ENCODE measurements at regions of chr1 and their contacts with region 1.

Region 1: DNA sequence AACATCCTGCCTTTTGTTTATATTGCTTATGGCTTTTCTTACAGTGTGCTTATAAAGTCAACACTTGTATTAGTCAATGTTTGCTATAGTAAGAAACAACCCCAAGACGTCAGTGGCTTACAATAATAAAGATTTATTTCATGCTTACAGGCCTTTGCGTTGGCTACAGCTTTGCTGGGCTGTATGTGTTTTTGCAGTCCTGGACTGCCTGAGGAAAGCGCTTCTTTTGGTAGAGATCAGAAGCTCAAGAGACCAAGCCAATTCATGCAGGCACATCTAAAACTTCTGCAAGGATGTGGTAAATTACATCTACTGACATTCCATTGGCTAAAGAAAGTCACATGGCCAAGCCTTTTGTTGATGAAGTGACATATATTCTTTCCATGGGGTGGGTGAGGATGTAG is 17.5 kb upstream of the PRKAA2 start:
- DNase-seq: peak; percentile 80
- ATAC-seq: peak; percentile 89
- H3K4me3 ChIP-seq: no peak overlapping the region
- H3K27ac ChIP-seq: peak overlapping the region; percentile 84
- H3K4me1 ChIP-seq: peaks cover 44% of the 10 kb centered on the region
- H3K27me3 ChIP-seq: no peaks in the 10 kb centered on the region
- CTCF ChIP-seq: no peak

Region 2: GRCh38 chr1:55868026-55868425 is 759.6 kb before region 1 on chr1:
- CTCF ChIA-PET with region 1: interaction called, 20 read pairs
- POLR2A ChIA-PET with region 1: no interaction called
- intact Hi-C with region 1: no loop called
- DNase-seq: peak; percentile 48
- ATAC-seq: peak; percentile 45
- H3K4me3 ChIP-seq: no peak overlapping the region
- H3K27ac ChIP-seq: peak overlapping the region; percentile 25
- H3K4me1 ChIP-seq: peaks cover 23% of the 10 kb centered on the region
- H3K27me3 ChIP-seq: no peaks in the 10 kb centered on the region
- CTCF ChIP-seq: peak; percentile 40; the same call in 1 of the 2 replicates

Region 3: DNA sequence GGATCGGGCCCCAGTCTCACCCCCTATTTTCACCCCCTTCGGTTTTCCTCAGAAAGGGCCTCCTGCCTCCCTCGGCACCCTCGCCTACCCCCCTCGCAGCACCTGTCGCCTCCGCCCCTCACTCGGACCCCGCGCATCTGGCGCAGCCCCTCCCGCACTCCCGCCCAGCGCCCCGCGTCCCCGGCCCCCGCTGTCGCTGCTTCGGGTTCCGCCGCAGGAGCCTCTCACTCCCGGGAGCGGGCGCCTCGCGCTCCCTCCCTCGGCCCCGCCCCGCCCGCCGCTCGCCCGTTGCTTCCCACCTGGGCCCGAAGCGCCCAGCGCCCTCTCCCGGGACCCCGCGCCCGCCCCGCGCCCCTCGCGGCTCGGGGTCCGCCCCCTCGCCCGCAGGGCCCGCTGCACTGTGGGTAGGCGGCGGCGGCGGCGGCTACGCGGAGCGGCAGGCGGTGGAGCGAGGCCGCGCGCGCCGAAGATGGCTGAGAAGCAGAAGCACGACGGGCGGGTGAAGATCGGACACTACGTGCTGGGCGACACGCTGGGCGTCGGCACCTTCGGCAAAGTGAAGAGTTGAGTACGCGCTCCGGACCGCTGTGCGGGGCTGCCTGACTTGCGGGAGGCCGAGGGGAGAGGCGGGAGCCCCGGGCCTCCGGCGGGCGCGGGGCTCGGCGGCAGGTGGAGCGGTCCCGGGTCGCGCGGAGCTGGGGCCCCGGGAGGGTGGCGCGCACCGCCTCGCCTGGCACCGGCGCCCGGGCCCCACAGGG is 17.5 kb after region 1 on chr1 and contains the start of gene PRKAA2:
- CTCF ChIA-PET with region 1: no interaction called
- POLR2A ChIA-PET with region 1: no interaction called
- intact Hi-C with region 1: loop called (anchors 2 kb)
- DNase-seq: peak; percentile 52
- ATAC-seq: peak; percentile 69
- H3K4me3 ChIP-seq: peak within 1 kb of the TSS; percentile 82
- H3K27ac ChIP-seq: peak within 1 kb of the TSS; percentile 32
- H3K4me1 ChIP-seq: peaks cover 13% of the 10 kb centered on the region
- H3K27me3 ChIP-seq: no peaks in the 10 kb centered on the region
- CTCF ChIP-seq: no peak
- total RNA-seq, gene PRKAA2: 3.4 and 4.5 TPM in 2 replicates

Region 4: GRCh38 chr1:56688506-56689026 is 60.9 kb after region 1 on chr1:
- CTCF ChIA-PET with region 1: no interaction called
- POLR2A ChIA-PET with region 1: interaction called, 3 read pairs
- intact Hi-C with region 1: loop called (anchors 1 kb)
- DNase-seq: peak; percentile 97
- ATAC-seq: peak; percentile 98
- H3K4me3 ChIP-seq: peak overlapping the region; percentile 3; the same call in 1 of the 2 replicates
- H3K27ac ChIP-seq: peak overlapping the region; percentile 78
- H3K4me1 ChIP-seq: peaks cover 33% of the 10 kb centered on the region
- H3K27me3 ChIP-seq: no peaks in the 10 kb centered on the region
- CTCF ChIP-seq: no peak

Region 5: DNA sequence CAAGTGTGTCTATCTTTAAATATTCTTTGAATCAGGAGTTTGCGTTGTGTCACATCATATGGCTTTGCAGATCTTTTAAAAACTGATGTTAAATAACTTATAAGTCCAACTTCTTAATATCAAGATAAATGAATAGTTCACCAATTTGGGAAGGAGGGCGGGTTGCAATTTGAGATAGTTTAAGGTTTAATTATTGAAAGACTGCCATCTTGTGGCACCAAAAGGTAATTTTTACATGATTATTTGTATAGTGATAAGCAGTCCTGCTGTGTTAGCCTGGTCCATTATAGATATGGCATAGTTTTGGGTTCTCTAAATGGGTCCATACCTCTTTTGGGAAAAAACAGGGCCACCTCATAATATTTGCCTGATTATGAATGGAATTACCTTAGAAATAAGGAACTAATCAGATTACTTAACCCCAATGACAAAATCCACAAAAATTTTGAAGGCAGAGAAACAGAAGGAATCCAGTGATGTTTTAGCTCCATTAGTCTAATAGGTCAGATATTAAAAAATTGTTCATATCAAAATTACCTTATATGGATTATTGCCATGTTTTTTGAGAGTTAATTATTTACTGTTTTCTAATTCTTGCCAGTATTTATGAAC is 81.7 kb after region 1 on chr1:
- CTCF ChIA-PET with region 1: no interaction called
- POLR2A ChIA-PET with region 1: no interaction called
- intact Hi-C with region 1: loop called (anchors 2 kb)
- DNase-seq: peak; percentile 87
- ATAC-seq: peak; percentile 70
- H3K4me3 ChIP-seq: no peak overlapping the region
- H3K27ac ChIP-seq: no peak overlapping the region
- H3K4me1 ChIP-seq: peaks cover 15% of the 10 kb centered on the region
- H3K27me3 ChIP-seq: no peaks in the 10 kb centered on the region
- CTCF ChIP-seq: peak; percentile 77

Region 6: GRCh38 chr1:56788588-56788987 is 160.9 kb after region 1 on chr1:
- CTCF ChIA-PET with region 1: interaction called, 10 read pairs
- POLR2A ChIA-PET with region 1: no interaction called
- intact Hi-C with region 1: no loop called
- DNase-seq: peak; percentile 6
- ATAC-seq: 0 out of 2 replicates have a peak, but pooled peaks have one; percentile 27
- H3K4me3 ChIP-seq: no peak overlapping the region
- H3K27ac ChIP-seq: no peak overlapping the region
- H3K4me1 ChIP-seq: no peaks in the 10 kb centered on the region
- H3K27me3 ChIP-seq: peaks cover 24% of the 10 kb centered on the region
- CTCF ChIP-seq: no peak

Region 7: DNA sequence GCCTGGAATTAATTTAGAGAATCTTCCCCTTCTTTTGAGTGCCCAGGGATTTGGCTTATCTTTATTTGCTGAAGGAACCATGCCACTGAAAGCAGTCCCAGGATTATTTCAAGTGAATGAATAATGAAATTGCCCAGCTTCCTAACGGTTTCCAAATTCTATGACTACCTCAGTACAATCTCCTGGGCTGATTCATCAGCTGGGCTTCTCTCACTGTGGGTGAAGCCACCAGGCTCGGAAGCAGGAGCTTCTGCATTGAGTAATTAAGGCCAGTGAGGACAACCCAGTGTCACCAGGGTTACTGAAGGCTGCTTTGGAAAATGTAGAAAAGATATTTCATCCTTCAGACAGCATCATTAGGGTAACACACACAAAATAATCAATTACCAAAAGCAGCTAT is 626.4 kb after region 1 on chr1:
- CTCF ChIA-PET with region 1: no interaction called
- POLR2A ChIA-PET with region 1: no interaction called
- intact Hi-C with region 1: no loop called
- DNase-seq: no peak
- ATAC-seq: no peak
- H3K4me3 ChIP-seq: no peak overlapping the region
- H3K27ac ChIP-seq: no peak overlapping the region
- H3K4me1 ChIP-seq: no peaks in the 10 kb centered on the region
- H3K27me3 ChIP-seq: no peaks in the 10 kb centered on the region
- CTCF ChIP-seq: no peak

Measured in PC-3 (cell line).